ENCODE measurements at regions of chr2 and their contacts with region 1.

Region 1: DNA sequence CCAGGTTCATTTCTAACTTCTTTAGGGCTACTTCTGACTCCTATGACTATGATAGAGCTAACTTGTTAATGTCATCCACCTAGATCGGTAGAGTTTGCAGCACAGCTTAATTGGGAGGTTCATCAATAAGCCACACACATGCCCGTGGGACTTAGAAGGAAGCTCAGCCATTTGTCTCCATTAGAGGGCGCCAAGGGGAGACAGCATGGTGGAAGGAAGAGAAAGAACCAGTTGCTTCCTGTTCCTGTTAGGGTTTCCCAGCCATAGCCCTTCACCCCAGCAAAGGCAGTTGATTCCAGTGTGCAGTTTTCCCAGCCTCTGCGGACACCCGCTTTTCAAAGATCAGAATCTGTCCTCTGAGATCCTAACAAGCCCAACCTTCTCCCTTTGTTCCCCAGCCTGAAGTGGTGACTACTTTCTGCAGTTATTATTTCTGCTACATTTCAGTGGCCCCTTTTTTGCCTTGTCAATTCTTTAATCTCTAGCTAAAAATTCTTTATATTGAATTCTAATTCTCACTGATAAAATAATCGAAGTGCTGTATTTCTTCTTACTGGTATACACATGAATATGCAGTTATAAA is 30.3 kb downstream of the MAIP1 start:
- DNase-seq: peak; percentile 32
- ATAC-seq: peak; percentile 74

Region 2: DNA sequence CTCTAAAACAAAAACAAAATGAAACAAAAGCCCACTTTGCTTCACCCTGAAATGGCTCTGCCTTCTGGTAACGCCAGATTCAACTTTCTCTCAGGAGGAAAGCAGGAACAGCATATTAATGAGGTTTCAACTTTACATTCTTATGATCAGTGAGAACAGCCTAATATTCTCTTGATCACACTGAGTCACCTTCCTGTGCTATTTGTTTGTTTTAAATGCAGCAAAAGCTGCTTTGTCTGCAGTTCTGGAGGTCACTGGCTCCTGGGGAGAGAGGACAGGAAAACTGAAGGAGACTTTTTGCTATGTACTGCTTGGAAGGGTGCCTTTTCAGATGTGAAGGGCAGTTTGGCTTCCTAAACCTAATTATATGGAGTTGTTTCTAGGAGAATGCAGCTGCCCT is 17.7 kb after region 1 on chr2:
- intact Hi-C with region 1: no loop called
- DNase-seq: no peak
- ATAC-seq: no peak

Region 3: DNA sequence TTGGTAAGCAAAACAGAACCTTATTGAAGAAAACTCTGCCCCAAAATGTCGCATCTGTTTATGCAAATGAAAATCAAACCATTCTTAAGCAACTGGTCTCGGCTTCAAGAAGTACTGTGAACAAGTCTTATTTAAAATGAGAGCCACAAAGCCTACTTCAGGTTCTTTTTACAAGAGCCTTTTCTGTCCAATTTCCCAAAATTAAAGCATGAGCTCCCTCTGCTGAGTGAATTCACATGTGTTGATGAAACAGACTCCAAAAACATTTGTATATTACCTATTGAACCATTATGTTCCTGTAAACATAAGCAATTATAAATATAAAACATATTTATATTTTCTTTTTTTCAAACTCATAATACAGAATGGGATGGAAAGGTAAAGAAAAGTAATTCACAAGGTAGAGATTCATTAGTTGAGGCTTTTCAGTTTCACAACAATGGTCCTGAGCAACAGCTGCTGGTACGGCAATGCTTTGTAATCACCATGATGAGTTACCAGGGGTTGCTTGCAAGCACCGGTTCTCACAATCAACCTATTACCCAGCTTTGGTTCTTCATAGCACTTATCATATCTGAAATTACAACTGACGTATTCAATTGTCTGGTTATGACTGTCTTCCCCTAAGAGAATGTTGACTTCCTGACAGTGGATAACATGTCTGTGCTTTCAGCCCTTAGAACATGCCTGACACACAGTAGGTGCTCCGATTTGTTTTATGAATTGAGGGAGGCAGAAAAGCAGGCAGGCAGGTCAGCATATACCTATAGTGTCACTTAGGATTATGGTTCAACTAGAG is 717.6 kb after region 1 on chr2:
- intact Hi-C with region 1: loop called (anchors 10 kb)
- DNase-seq: no peak
- ATAC-seq: peak; percentile 28

Measured in left ventricle myocardium superior (tissue), 1 donor.